Pancreas (tissue), 10 donors: ENCODE measurements at regions of chr1 and their contacts with region 1.

Region 1: DNA sequence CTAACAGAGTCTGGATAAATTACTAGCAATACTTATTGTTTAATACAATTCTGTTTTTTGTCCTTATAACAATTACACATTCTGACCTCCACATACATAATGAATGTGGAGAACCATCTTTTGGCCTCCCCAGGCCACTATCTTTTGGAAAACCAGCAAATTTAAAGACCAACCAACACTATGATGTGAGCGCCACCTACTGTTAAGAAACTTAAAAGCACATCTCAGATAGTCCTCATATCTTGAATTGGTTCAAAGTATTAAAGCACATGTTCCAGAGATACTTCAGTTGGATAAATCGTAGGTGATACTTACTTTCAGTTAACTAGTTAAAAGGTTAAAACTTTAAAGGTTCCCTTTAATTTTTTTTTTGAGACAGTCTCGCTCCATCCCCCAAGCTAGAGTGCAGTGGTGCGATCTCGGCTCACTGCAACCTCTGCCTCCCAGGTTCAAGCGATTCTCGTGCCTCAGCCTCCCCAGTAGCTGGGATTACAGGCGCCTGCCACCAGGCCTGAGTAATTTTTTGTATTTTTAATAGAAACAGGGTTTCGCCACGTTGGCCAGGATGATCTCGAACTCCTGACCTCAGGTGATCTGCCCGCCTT is 29.3 kb upstream of the USP1 start:
- DNase-seq: peak in 1 of 6 donors; percentile 18
- ATAC-seq: peak; percentile 56 to 90 (median 84)
- H3K4me3 ChIP-seq: no peak overlapping the region
- H3K27ac ChIP-seq: no peak overlapping the region
- H3K4me1 ChIP-seq: no peaks in the 10 kb centered on the region
- H3K27me3 ChIP-seq: no peaks in the 10 kb centered on the region
- CTCF ChIP-seq: peak; percentile 34 to 66 (median 60)

Region 2: GRCh38 chr1:62175568-62176179 is 231.8 kb before region 1 on chr1:
- intact Hi-C with region 1: loop called (anchors 2 to 10 kb)
- DNase-seq: peak in 3 of 6 donors; percentile 16 to 63 (median 20)
- ATAC-seq: peak in 3 of 4 donors; percentile 81 to 86 (median 86)
- H3K4me3 ChIP-seq: no peak overlapping the region
- H3K27ac ChIP-seq: no peak overlapping the region
- H3K4me1 ChIP-seq: no peaks in the 10 kb centered on the region
- H3K27me3 ChIP-seq: no peaks in the 10 kb centered on the region
- CTCF ChIP-seq: peak; percentile 37 to 63 (median 56)

Region 3: DNA sequence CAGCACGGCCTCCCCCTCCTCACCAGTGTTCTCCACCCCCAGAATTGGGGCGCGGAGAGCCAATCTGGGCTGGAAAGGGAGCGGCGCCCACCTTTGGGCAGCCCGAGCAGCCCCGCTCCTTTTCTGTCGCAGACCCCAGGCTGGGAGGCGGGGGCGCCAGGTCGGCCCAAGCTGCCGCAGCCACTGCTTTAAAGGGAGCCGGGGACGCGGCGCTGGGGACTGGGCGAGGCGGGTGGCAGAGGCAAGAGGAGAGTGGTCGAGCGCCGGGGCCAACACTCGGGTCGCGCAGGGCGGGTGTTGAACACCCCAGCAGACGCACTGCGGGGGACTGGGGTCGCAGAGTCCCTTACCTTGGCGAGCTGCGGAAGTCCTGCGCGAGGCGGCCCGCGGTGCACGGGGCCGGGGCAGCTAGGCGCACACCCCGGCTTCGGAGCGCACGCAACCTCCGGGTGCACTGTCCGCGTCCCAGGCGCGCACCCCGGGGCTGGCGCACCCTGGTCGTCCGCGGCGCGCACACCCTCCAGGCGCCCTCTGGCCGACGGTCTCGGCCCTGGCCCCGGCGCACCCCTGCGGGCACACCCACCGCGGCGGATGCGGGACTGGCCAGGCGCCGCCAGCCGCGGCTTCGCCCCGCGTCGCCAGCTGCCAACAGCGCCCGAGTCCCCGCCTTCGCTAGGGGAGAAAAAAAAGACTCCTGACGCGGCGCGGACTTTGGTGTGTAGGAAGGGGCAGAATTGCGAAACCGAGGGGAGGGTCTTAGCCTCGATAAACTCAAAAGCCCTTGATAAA is 88.6 kb before region 1 on chr1 and contains the start of gene KANK4:
- intact Hi-C with region 1: no loop called
- DNase-seq: peak in 5 of 6 donors; percentile 50 to 81 (median 51)
- ATAC-seq: peak; percentile 60 to 78 (median 66)
- H3K4me3 ChIP-seq: peak within 1 kb of the TSS; percentile 49 to 67 (median 60)
- H3K27ac ChIP-seq: peak within 1 kb of the TSS; percentile 43 to 74 (median 60)
- H3K4me1 ChIP-seq: no peaks in the 10 kb centered on the region
- H3K27me3 ChIP-seq: no peaks in the 10 kb centered on the region
- CTCF ChIP-seq: no peak
- total RNA-seq, gene KANK4: 7.1 to 12.5 (median 9.1) TPM